ENCODE measurements at regions of chr4 and their contacts with region 1.

Region 1: DNA sequence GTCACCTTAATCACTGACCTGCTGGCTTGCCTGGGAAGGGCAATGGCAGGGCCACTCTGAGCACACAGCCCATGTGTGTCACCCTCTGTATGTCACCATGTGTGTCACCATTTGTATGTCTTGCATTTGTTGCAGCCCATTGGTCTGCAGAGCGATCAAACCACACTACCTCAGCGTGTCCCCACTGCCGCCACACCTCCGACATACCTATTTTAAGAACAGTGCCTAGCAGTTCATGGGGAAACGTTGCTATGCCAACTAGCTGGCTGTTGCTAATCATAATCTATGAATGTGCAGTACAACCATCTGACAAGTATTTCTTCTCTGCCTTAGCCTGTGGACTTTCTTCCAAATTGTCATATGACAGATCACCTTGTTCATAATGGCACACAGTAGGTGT is 8.0 kb upstream of the CRMP1 start:
- DNase-seq: no peak
- ATAC-seq: no peak
- H3K4me3 Mint-ChIP-seq: no peak overlapping the region
- H3K27ac Mint-ChIP-seq: no peak overlapping the region
- H3K4me1 Mint-ChIP-seq: no peaks in the 10 kb centered on the region
- H3K27me3 Mint-ChIP-seq: peaks cover 27% of the 10 kb centered on the region

Region 2: GRCh38 chr4:5845035-5845905 is 55.6 kb before region 1 on chr4:
- CTCF ChIA-PET with region 1: no interaction called
- POLR2A ChIA-PET with region 1: no interaction called
- intact Hi-C with region 1: no loop called
- DNase-seq: no peak
- ATAC-seq: no peak
- H3K4me3 Mint-ChIP-seq: no peak overlapping the region
- H3K27ac Mint-ChIP-seq: no peak overlapping the region
- H3K4me1 Mint-ChIP-seq: no peaks in the 10 kb centered on the region
- H3K27me3 Mint-ChIP-seq: peaks cover 13% of the 10 kb centered on the region

Region 3: GRCh38 chr4:5884796-5885195 is 16.0 kb before region 1 on chr4:
- CTCF ChIA-PET with region 1: no interaction called
- POLR2A ChIA-PET with region 1: no interaction called
- intact Hi-C with region 1: loop called in 1 of 2 experiments (anchors 1 kb)
- DNase-seq: no peak
- ATAC-seq: no peak
- H3K4me3 Mint-ChIP-seq: no peak overlapping the region
- H3K27ac Mint-ChIP-seq: no peak overlapping the region
- H3K4me1 Mint-ChIP-seq: peaks cover 3% of the 10 kb centered on the region
- H3K27me3 Mint-ChIP-seq: peaks cover 54% of the 10 kb centered on the region